ENCODE measurements at regions of chr19 and their contacts with region 1.

Region 1: GRCh38 chr19:21626924-21627697 is 121.7 kb downstream of the ZNF429 start:
- DNase-seq: no peak
- H3K4me3 ChIP-seq: no peak overlapping the region
- H3K27ac ChIP-seq: no peak overlapping the region
- H3K4me1 ChIP-seq: no peaks in the 10 kb centered on the region
- CTCF ChIP-seq: no peak

Region 2: GRCh38 chr19:21505459-21506451 is 121.4 kb before region 1 on chr19 and contains the start of gene ZNF429:
- CTCF ChIA-PET with region 1: no interaction called
- POLR2A ChIA-PET with region 1: interaction called, 11 read pairs
- intact Hi-C with region 1: no loop called
- DNase-seq: peak; percentile 96
- H3K4me3 ChIP-seq: peak within 1 kb of the TSS; percentile 84
- H3K27ac ChIP-seq: peak within 1 kb of the TSS; percentile 67
- H3K4me1 ChIP-seq: peaks cover 11% of the 10 kb centered on the region
- CTCF ChIP-seq: no peak
- total RNA-seq, gene ZNF429: 12.8 and 19.8 TPM in 2 replicates

Region 3: DNA sequence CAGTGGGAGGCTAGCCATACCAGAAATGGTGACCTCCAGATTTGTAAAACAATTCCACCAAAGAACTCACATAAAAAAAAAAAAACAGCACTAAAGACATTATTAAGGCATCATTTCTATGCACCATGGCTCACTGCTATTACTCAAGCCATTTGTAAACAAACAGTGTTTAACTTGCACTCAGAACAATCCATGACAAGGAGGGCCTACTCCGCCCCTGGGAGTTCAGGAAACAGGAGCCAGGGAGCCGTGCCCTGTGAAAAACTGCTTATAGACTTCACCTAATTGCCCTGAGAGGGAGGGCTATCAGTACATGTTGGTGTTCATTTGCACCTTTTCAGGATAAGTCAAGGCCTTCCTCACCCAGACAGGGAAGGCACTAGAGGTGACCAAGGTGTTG is 18.5 kb before region 1 on chr19:
- CTCF ChIA-PET with region 1: no interaction called
- POLR2A ChIA-PET with region 1: no interaction called
- intact Hi-C with region 1: no loop called
- DNase-seq: no peak
- H3K4me3 ChIP-seq: no peak overlapping the region
- H3K27ac ChIP-seq: no peak overlapping the region
- H3K4me1 ChIP-seq: peaks cover 7% of the 10 kb centered on the region
- CTCF ChIP-seq: no peak

Region 4: GRCh38 chr19:21638776-21639175 is 11.7 kb after region 1 on chr19:
- CTCF ChIA-PET with region 1: no interaction called
- POLR2A ChIA-PET with region 1: no interaction called
- intact Hi-C with region 1: no loop called
- DNase-seq: no peak
- H3K4me3 ChIP-seq: no peak overlapping the region
- H3K27ac ChIP-seq: no peak overlapping the region
- H3K4me1 ChIP-seq: no peaks in the 10 kb centered on the region
- CTCF ChIP-seq: no peak